ENCODE measurements at regions of chr2 and their contacts with region 1.

Region 1: GRCh38 chr2:31170071-31170698 is 31.9 kb upstream of the GALNT14 start:
- DNase-seq: peak in 4 of 5 donors; percentile 27 to 37 (median 30)
- H3K4me3 ChIP-seq: no peak overlapping the region
- H3K4me3 Mint-ChIP-seq: no peak overlapping the region
- H3K27ac ChIP-seq: no peak overlapping the region
- H3K27ac Mint-ChIP-seq: no peak overlapping the region
- H3K4me1 ChIP-seq: no peaks in the 10 kb centered on the region
- H3K4me1 Mint-ChIP-seq: peaks cover 0 to under 1% (median 0%) of the 10 kb centered on the region in 4 donors
- H3K27me3 ChIP-seq: no peaks in the 10 kb centered on the region
- H3K27me3 Mint-ChIP-seq: no peaks in the 10 kb centered on the region

Region 2: GRCh38 chr2:31151501-31151900 is 18.7 kb before region 1 on chr2:
- CTCF ChIA-PET with region 1: interaction called, 18 read pairs
- POLR2A ChIA-PET with region 1: no interaction called
- intact Hi-C with region 1: no loop called
- DNase-seq: no peak
- H3K4me3 ChIP-seq: no peak overlapping the region
- H3K4me3 Mint-ChIP-seq: no peak overlapping the region
- H3K27ac ChIP-seq: no peak overlapping the region
- H3K27ac Mint-ChIP-seq: no peak overlapping the region
- H3K4me1 ChIP-seq: no peaks in the 10 kb centered on the region
- H3K4me1 Mint-ChIP-seq: no peaks in the 10 kb centered on the region
- H3K27me3 ChIP-seq: no peaks in the 10 kb centered on the region
- H3K27me3 Mint-ChIP-seq: peaks cover 8 to 11% of the 10 kb centered on the region in 2 donors

Region 3: DNA sequence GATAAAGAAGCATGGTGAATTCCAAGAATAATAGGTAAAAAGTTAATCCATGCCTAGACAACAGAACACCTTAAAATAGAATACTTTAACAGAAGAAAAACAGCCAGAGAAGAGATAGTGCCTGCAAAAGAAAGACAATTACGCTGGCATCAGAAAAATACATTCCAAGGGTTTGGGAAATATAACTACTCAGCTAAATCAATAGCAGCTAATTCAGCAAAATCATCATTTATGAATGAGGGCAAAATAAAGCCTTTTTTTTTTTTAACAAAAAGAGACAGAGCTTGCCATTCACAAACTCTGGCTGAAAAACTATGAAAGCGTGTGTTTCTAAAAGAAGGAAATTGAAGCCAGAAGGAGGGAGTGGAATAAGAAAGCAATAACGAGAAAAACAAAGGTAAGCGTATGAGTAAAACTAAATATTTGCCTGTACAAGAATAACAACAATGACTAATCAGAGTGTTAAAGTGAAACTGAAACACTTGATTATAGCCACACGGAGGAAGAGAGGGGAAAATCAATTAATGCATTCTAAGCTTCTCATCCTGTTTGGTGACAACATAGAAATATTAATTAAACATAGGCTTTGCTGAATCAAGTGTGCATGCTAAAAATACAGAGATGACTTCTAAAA is 153.9 kb after region 1 on chr2:
- CTCF ChIA-PET with region 1: interaction called, 11 read pairs
- POLR2A ChIA-PET with region 1: no interaction called
- intact Hi-C with region 1: no loop called
- DNase-seq: peak in 4 of 5 donors; percentile 9 to 28 (median 25)
- H3K4me3 ChIP-seq: peak overlapping the region in 1 of 2 donors; percentile 39
- H3K4me3 Mint-ChIP-seq: peak overlapping the region; percentile 71 to 84 (median 82)
- H3K27ac ChIP-seq: no peak overlapping the region
- H3K27ac Mint-ChIP-seq: peak overlapping the region; percentile 58 to 94 (median 88)
- H3K4me1 ChIP-seq: peaks cover 41% of the 10 kb centered on the region
- H3K4me1 Mint-ChIP-seq: peaks cover 40 to 62% (median 50%) of the 10 kb centered on the region in 4 donors
- H3K27me3 ChIP-seq: no peaks in the 10 kb centered on the region
- H3K27me3 Mint-ChIP-seq: no peaks in the 10 kb centered on the region

Measured in CD4-positive, alpha-beta memory T cell (primary cell).